MCF 10A (cell line): ENCODE measurements at regions of chr15 and their contacts with region 1.

Region 1: GRCh38 chr15:70488002-70488605 is 275.3 kb downstream of the UACA start:
- DNase-seq: peak; percentile 77
- H3K4me3 Mint-ChIP-seq: no peak overlapping the region
- H3K27ac Mint-ChIP-seq: no peak overlapping the region
- H3K4me1 Mint-ChIP-seq: peaks cover 26% of the 10 kb centered on the region
- H3K27me3 Mint-ChIP-seq: peaks cover 3% of the 10 kb centered on the region
- CTCF ChIP-seq: peak; percentile 94

Region 2: GRCh38 chr15:69523010-69524001 is 964.8 kb before region 1 on chr15:
- CTCF ChIA-PET with region 1: interaction called, 5 read pairs
- POLR2A ChIA-PET with region 1: no interaction called
- intact Hi-C with region 1: loop called (anchors 1 kb)
- DNase-seq: peak; percentile 76
- H3K4me3 Mint-ChIP-seq: no peak overlapping the region
- H3K27ac Mint-ChIP-seq: no peak overlapping the region
- H3K4me1 Mint-ChIP-seq: no peaks in the 10 kb centered on the region
- H3K27me3 Mint-ChIP-seq: peaks cover 11% of the 10 kb centered on the region
- CTCF ChIP-seq: peak; percentile 75

Region 3: GRCh38 chr15:69729161-69729748 is 758.8 kb before region 1 on chr15:
- CTCF ChIA-PET with region 1: interaction called, 8 read pairs
- POLR2A ChIA-PET with region 1: no interaction called
- intact Hi-C with region 1: loop called (anchors 5 kb)
- DNase-seq: peak; percentile 39
- H3K4me3 Mint-ChIP-seq: no peak overlapping the region
- H3K27ac Mint-ChIP-seq: no peak overlapping the region
- H3K4me1 Mint-ChIP-seq: no peaks in the 10 kb centered on the region
- H3K27me3 Mint-ChIP-seq: peaks cover 56% of the 10 kb centered on the region
- CTCF ChIP-seq: peak; percentile 75

Region 4: DNA sequence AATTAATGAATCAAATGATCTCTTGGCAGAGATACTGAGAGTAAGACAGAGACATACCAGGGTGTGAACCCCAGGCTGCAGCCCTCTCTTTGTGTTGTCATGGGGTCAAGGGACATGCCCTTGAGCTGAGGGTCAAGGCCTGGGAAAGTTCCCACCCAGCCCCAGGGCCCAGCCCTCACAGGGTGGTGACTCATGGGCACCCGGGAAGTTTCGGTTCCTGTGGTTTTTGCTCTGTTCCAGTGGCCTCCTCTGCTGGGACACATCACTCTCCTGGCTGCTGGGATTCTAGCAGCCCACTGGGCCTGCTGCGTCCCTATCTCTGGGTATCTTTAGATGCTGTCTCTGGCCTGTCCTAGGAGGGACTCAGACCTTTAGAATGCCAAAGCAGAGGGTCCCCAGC is 242.2 kb before region 1 on chr15:
- CTCF ChIA-PET with region 1: no interaction called
- POLR2A ChIA-PET with region 1: no interaction called
- intact Hi-C with region 1: no loop called
- DNase-seq: peak; percentile 91
- H3K4me3 Mint-ChIP-seq: no peak overlapping the region
- H3K27ac Mint-ChIP-seq: no peak overlapping the region
- H3K4me1 Mint-ChIP-seq: peaks cover 12% of the 10 kb centered on the region
- H3K27me3 Mint-ChIP-seq: no peaks in the 10 kb centered on the region
- CTCF ChIP-seq: no peak

Region 5: DNA sequence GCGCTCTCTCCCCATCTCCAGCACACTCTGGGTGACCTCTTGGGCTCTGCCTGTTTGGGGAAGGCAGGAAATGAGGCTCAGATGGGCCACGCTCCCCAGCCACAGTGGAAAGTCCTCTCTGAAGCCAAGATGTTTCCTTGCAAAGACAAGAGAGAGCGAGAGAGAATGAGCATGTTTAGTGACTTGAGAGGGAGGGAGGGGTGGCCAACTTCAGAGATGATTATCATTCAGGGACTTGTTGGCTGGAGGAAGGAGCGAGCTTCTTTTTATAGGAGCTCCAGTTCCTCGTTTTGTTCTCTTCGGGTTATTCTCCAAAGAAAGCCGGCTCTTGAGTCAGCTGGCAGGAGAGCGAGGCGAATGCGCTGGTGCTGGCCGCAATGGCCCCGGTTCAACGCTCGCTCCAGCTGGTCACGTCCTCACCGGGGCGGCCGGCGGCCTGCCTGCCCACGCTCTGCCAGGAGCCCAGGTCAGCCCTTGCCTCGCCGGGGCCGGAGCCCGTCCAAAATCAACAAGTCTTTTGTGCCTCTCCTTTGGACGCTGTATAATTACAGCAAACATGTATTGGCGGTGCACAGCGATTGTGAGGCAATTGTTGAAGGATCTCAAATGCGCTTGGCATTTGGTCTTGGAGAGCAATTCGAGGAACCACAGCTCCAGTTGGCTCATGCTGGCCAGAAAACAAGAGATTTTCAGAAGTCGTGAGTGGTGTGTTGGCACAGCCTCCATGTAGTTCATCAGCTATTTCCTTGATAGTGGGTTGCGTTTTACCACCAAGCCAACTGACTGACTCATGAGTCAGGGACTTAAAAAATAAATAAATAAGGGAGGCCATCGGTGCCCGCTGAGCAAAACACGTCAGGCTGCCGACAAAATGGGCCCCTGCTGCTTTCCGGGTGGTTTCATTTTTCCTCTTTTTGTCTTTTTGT is 13.4 kb before region 1 on chr15:
- CTCF ChIA-PET with region 1: interaction called, 13 read pairs
- POLR2A ChIA-PET with region 1: interaction called, 3 read pairs
- intact Hi-C with region 1: no loop called
- DNase-seq: peak; percentile 98
- H3K4me3 Mint-ChIP-seq: peak overlapping the region; percentile 58
- H3K27ac Mint-ChIP-seq: peak overlapping the region; percentile 91
- H3K4me1 Mint-ChIP-seq: peaks cover 17% of the 10 kb centered on the region
- H3K27me3 Mint-ChIP-seq: peaks cover 14% of the 10 kb centered on the region
- CTCF ChIP-seq: no peak